Activated T-helper 1 cell treated with anti-CD3 and anti-CD28 coated beads, Interleukin-12 subunit alpha, Interleukin-12 subunit beta, Interleukin-2, Interleukin-4 antibody, amounts not matched to agents 30 ng/mL and 10 ng/mL and 1 ng/mL, durations not matched to agents 14 hours and 24 hours and 36 hours (primary cell): ENCODE measurements at regions of chr3 and their contacts with region 1.

Region 1: DNA sequence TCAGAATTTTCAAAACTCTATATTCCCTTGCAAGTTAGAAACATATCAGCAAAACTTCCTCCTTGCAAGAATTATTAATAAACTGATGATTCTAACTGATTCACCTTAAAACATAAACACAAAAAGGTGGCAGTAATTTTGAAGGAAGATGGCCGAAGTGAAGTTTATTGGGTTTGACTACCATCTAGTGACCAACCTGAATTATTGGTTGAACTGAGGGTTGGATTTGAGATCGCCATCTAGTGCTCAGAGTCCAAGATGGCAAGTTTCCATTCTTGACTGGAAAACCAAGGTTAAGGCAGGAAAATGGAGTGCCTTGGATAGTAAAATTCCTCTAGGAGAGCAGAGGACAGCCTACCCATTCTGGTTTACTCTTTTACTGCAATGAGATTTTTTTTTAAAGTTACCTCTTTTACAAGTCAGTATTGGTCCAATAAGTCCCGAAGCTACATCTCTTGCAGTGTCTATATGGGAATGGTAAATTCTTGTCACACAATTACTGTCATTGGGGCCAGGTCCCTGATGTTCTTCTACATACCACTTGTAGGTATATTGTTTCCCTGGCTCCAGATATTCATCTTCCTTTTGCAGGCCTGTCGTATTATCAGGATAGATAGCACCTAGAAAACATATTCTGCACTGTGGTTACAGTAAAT is 51.6 kb upstream of the CP start:
- DNase-seq: peak; percentile 17
- H3K4me3 Mint-ChIP-seq: no peak overlapping the region
- H3K27ac Mint-ChIP-seq: no peak overlapping the region
- H3K4me1 Mint-ChIP-seq: peaks cover 18% of the 10 kb centered on the region
- H3K27me3 Mint-ChIP-seq: peaks cover 17% of the 10 kb centered on the region

Region 2: DNA sequence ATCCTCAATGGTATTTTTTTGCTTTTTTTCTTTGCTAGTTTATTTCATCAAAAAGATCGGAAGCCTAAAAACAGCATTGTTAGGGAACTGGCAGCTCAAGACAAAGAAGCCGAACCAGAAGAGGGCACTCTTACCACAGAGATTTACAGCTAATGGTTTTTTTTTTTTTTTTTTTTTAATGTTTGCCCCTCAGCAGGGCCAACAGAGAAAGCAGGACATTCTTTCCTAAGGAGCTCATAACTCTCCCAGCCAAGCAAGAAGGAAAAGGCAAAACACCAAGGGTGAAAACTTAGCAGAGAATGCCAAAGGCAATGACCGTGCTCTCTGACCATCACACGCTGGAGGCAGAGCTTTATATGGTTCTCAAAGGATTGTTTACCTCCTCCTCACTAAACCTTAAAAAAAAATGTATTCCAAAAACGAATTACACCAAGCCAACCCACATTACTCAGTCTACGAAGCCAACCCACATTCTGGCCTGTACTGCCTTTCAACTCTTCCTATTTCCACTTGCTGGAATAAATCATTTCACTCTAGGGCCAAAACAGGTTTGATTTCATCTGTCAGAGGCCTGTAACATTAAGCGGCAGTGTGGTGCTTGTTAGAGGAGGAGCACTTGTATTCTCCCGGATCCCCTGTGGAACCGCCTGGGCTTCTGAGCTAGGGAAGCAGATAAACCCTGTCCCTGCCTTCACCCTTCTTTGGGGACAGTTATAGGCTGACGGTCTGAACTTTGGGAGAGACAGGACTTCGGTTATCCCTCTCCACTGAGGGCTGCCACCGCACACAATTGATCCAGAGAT is 317.5 kb before region 1 on chr3:
- intact Hi-C with region 1: loop called (anchors 1 kb)
- DNase-seq: no peak
- H3K4me3 Mint-ChIP-seq: no peak overlapping the region
- H3K27ac Mint-ChIP-seq: no peak overlapping the region
- H3K4me1 Mint-ChIP-seq: peaks cover 10% of the 10 kb centered on the region
- H3K27me3 Mint-ChIP-seq: peaks cover 18% of the 10 kb centered on the region

Region 3: GRCh38 chr3:149129326-149130205 is 143.7 kb before region 1 on chr3 and contains the start of gene HPS3:
- intact Hi-C with region 1: loop called (anchors 2 kb)
- DNase-seq: peak; percentile 84
- H3K4me3 Mint-ChIP-seq: peak within 1 kb of the TSS; percentile 92
- H3K27ac Mint-ChIP-seq: peak within 1 kb of the TSS; percentile 88
- H3K4me1 Mint-ChIP-seq: peaks cover 39% of the 10 kb centered on the region
- H3K27me3 Mint-ChIP-seq: peaks cover 33% of the 10 kb centered on the region
- total RNA-seq, gene HPS3: 15.8 and 17.3 TPM in 2 replicates

Region 4: GRCh38 chr3:149203758-149204157 is 69.5 kb before region 1 on chr3:
- intact Hi-C with region 1: loop called (anchors 5 kb)
- DNase-seq: no peak
- H3K4me3 Mint-ChIP-seq: no peak overlapping the region
- H3K27ac Mint-ChIP-seq: no peak overlapping the region
- H3K4me1 Mint-ChIP-seq: peaks cover 20% of the 10 kb centered on the region
- H3K27me3 Mint-ChIP-seq: peaks cover 44% of the 10 kb centered on the region